Aorta (tissue), 5 donors: ENCODE measurements at regions of chr5 and their contacts with region 1.

Region 1: GRCh38 chr5:126354012-126354857 is 69.0 kb upstream of the GRAMD2B start:
- DNase-seq: no peak
- ATAC-seq: peak; percentile 70
- H3K4me3 ChIP-seq: peak overlapping the region in 1 of 2 donors; percentile 48
- H3K27ac ChIP-seq: no peak overlapping the region
- H3K4me1 ChIP-seq: no peaks in the 10 kb centered on the region
- H3K27me3 ChIP-seq: no peaks in the 10 kb centered on the region

Region 2: DNA sequence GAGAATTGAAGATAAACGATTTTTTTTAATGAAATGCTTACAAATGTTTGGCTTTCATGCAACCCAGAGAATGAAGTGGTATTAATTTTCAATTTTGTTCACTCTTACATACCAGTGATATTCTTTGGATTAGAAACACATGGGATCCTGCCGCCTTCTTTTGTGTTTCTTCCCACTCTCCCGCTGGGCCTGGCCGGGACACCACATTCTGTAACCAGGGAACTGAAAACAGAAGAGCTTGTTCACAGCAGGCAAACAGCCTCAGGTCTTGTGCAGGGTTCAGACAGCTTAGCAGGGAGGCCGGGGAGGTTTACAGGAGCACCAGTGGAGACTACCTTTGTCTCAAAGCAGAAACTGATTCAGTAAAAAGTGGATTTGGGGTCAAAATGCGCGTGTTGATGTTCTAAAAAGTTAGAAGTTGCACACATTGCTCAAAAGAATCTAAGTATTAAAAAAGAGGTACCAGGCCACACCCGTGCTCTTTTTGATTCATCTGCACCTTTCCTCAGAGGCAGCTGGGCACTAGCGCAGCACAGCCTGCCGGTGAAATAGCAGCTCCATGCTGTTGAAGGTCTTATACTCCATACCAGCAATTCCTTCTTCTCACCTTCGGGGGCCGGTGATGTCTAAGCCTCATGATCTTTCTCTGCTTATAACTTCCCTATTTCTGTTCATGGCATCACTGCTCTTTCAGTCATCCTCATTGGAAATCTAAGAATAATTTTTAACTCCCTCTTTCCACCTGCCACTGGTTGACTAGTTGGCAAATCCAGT is 136.1 kb after region 1 on chr5:
- intact Hi-C with region 1: loop called in 1 of 2 experiments (anchors 5 kb)
- DNase-seq: no peak
- ATAC-seq: peak; percentile 70
- H3K4me3 ChIP-seq: no peak overlapping the region
- H3K27ac ChIP-seq: peak overlapping the region; percentile 33 to 73
- H3K4me1 ChIP-seq: peaks cover 0 to 2% of the 10 kb centered on the region in 2 donors
- H3K27me3 ChIP-seq: no peaks in the 10 kb centered on the region

Region 3: DNA sequence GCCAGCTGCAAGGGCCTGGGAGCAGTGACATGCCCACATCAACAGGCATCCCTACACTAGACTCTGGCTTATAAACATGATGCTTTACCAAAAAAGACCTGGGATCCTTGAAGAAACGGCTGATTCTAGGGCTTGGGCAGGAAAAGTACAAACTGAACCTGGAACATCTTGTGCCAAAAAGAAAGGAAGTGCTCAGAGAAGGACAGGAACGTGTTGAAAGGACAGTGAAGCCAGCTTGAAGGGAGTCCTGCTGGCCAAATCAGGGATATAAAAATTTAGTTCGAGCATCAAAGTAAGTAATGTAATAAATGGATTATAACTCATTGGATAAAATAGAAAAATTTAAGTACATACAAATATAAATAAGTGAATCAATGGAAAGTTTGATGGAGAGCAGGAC is 182.6 kb after region 1 on chr5:
- intact Hi-C with region 1: loop called in 1 of 2 experiments (anchors 2 kb)
- DNase-seq: no peak
- ATAC-seq: no peak
- H3K4me3 ChIP-seq: no peak overlapping the region
- H3K27ac ChIP-seq: no peak overlapping the region
- H3K4me1 ChIP-seq: peaks cover 0 to 2% of the 10 kb centered on the region in 2 donors
- H3K27me3 ChIP-seq: no peaks in the 10 kb centered on the region